Right ventricle myocardium inferior (tissue), 1 donor: ENCODE measurements at regions of chr17 and their contacts with region 1.

Region 1: GRCh38 chr17:61517843-61518606 is 65.8 kb downstream of the TBX4 start:
- DNase-seq: no peak
- ATAC-seq: no peak

Region 2: GRCh38 chr17:61475398-61476113 is 42.5 kb before region 1 on chr17:
- intact Hi-C with region 1: loop called (anchors 2 kb)
- DNase-seq: no peak
- ATAC-seq: no peak